ENCODE measurements at regions of chr1 and their contacts with region 1.

Region 1: GRCh38 chr1:199878823-199879222 is 148.7 kb upstream of the NR5A2 start:
- DNase-seq: no peak
- ATAC-seq: no peak
- H3K4me3 ChIP-seq: no peak overlapping the region
- H3K27ac ChIP-seq: no peak overlapping the region
- H3K4me1 ChIP-seq: no peaks in the 10 kb centered on the region
- H3K27me3 ChIP-seq: peaks cover 11% of the 10 kb centered on the region
- CTCF ChIP-seq: no peak

Region 2: DNA sequence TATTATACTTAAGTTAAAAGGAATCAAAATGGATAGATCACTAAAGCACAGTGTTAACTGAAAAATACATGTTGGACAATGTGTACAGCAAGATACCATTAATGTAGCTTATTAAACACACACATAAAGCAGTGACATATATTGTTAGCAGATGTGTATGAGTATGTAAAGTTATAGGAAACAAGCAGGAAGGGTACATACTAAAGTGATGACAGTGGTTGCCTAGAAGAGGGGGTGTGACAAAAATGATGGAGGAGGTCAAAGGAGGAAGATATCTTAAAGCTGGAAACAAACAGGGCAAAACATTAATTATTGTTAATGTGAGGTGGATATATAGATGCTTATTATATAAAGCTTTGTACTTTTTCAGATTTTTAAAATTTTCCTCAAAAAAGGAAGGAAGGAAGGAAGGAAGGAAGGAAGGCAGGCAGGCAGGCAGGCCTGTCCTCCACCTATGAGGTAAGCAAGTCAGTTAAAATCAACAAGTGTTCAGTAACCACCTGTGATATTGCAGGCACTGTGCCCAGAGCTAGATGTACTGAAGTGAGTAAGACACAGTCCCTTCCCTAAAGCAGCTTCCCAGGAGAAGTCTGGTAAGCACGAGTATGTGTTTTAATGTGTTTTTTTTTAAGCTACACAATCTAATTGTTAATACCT is 104.3 kb before region 1 on chr1:
- CTCF ChIA-PET with region 1: no interaction called
- POLR2A ChIA-PET with region 1: no interaction called
- intact Hi-C with region 1: no loop called
- DNase-seq: peak; percentile 97
- ATAC-seq: peak; percentile 99
- H3K4me3 ChIP-seq: no peak overlapping the region
- H3K27ac ChIP-seq: no peak overlapping the region
- H3K4me1 ChIP-seq: peaks cover 9% of the 10 kb centered on the region
- H3K27me3 ChIP-seq: no peaks in the 10 kb centered on the region
- CTCF ChIP-seq: no peak

Region 3: DNA sequence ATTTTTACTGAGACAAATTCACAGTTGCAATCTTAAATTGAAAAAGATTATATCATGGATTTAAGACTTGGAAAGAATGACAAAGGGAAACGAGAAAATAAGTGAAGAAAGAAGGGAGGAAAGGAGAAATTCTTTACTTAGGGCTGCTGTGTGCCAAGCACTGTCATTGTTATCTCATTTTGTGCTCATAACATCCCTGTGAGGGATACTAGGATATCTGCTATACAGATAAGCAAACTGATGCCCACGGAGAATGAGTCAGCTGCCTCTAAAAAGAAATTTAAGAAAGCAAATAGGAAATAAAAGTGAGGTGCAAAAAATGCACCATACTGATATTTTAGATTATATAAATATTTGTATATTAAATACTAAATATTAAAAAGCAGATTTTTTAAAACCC is 35.0 kb before region 1 on chr1:
- CTCF ChIA-PET with region 1: no interaction called
- POLR2A ChIA-PET with region 1: no interaction called
- intact Hi-C with region 1: loop called (anchors 2 kb)
- DNase-seq: no peak
- ATAC-seq: no peak; the same call in 1 of the 2 replicates
- H3K4me3 ChIP-seq: no peak overlapping the region
- H3K27ac ChIP-seq: no peak overlapping the region
- H3K4me1 ChIP-seq: no peaks in the 10 kb centered on the region
- H3K27me3 ChIP-seq: peaks cover 22% of the 10 kb centered on the region
- CTCF ChIP-seq: no peak